ENCODE measurements at regions of chr12 and their contacts with region 1.

Region 1: DNA sequence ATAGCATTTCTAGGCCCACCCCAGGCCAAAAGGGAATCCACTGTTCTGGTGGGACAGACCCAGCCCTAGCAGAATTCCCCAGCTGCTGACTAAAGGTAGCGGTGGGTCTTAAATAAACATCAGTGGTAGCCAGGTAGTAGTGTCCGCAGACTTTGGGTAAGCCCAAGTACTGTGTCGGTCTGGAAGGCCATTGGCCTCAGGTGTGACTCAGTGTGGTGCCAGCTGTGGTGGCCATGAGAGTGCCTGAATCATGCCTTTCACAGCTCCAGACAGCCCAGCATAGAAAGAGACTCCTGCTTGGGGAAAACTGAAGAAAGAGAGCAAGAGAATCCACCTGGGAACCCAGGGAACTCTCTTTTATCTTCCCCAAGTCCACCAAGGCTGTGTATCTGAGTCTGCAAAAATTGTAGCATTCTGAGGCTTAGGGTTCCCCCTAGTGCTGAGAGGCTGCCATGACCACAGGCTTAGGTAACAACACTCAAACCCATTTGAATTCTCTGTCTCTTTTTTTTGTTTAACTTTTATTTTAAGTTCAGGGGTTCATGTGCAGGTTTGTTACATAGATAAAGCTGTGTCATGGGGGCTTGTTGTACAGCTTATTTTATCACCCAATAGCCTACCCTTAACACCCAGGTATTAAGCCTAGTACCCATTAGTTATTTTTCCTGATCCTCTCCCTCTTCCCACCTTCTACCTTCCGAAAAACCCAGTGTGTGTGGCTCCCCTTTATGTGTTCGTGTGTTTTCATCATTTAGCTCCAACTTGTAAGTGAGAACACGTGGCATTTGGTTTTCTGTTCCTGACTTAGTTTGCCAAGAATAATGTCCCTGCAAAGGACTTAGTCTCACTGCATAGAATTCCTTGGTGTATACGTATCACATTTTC is 16.7 kb upstream of the CD163L1 start:
- DNase-seq: peak; percentile 46
- ATAC-seq: peak; percentile 91
- H3K4me3 ChIP-seq: no peak overlapping the region
- H3K27ac ChIP-seq: no peak overlapping the region
- H3K4me1 ChIP-seq: no peaks in the 10 kb centered on the region
- H3K27me3 ChIP-seq: no peaks in the 10 kb centered on the region
- CTCF ChIP-seq: peak; percentile 86
- EP300 ChIP-seq: no peak
- POLR2A ChIP-seq: no peak
- RAD21 ChIP-seq: peak; percentile 69

Region 2: DNA sequence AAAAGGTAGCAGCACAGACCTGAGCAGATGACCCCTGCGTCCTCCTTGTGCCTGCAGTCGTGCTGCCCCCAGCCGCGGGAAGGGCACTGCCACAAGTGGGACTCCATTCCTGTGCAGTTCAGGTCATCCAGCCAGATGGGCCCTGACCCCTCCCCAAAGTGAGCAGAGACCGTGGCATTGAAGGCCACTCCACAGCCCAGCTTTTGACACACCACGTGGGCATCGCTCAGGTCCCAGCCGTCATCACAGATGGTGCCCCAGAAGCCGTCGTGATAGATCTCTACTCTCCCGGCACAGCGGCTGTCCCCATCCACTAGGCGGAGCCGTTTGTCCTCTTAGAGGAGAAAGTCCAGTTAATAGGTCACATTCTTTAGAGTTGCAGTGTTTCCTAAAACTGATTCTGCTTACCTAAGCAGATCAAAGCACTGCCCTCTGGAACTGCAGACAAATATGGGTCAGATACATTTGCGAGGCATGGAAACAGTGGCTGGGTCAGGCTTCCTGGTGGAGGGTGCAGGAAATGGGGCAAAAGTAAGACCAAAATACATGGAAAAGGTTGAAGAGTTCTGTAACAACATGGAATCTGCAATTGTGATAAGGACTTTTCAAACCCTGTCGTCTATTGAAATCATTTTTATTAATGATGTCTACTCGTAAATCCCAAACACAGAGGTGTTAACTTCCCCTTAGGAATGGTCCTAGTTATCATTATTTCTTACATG is 86.0 kb before region 1 on chr12:
- CTCF ChIA-PET with region 1: interaction called, 8 read pairs
- POLR2A ChIA-PET with region 1: no interaction called
- in situ Hi-C with region 1: loop called (anchors 5 kb)
- intact Hi-C with region 1: loop called (anchors 2 kb)
- DNase-seq: peak; percentile 80
- ATAC-seq: peak; percentile 99
- H3K4me3 ChIP-seq: no peak overlapping the region
- H3K27ac ChIP-seq: no peak overlapping the region
- H3K4me1 ChIP-seq: peaks cover 13% of the 10 kb centered on the region
- H3K27me3 ChIP-seq: no peaks in the 10 kb centered on the region; a peak in 1 of 5 replicates
- CTCF ChIP-seq: peak; percentile 93
- EP300 ChIP-seq: no peak
- POLR2A ChIP-seq: no peak
- RAD21 ChIP-seq: peak; percentile 62

Region 3: DNA sequence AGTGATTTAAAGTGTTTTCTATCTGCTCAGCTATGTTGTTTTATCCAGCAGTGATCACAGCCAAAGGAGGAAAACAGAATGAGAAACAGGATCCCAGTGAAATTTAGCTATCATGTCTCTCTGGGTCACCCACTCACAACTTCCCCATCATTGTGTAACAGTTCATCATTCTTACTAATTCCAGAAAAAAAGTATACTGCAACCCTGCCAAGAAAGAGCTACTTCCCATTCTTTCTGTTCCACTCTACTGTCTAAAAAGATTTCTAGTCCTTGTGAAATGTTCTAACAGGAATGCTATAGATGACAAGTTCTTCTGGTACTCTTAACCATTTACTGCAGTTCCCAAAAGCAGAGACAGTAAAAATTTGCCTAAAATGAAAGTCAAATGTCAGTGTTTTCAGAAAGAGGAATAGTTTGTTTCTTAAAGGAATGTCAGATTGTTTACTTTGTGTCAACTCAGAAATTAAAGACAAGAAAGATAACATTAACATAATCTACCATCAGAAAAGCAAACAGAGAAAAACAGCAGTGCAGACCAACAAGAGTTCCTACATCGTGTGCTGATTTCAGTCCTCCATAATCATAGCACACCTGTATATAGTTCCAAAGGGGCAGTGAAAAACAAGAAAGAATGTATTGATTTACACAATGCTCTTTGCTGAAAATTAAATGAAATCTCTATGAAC is 82.3 kb after region 1 on chr12:
- CTCF ChIA-PET with region 1: no interaction called
- POLR2A ChIA-PET with region 1: no interaction called
- in situ Hi-C with region 1: no loop called
- intact Hi-C with region 1: no loop called
- DNase-seq: no peak
- ATAC-seq: no peak
- H3K4me3 ChIP-seq: no peak overlapping the region
- H3K27ac ChIP-seq: no peak overlapping the region
- H3K4me1 ChIP-seq: no peaks in the 10 kb centered on the region
- H3K27me3 ChIP-seq: peaks cover 0 to 3% of the 10 kb centered on the region in 2 experiments; a peak in 1 of 5 replicates
- CTCF ChIP-seq: no peak
- EP300 ChIP-seq: no peak
- POLR2A ChIP-seq: no peak
- RAD21 ChIP-seq: no peak

Measured in HepG2 (cell line).